Motor neuron (in vitro differentiated cells): ENCODE measurements at regions of chr3 and their contacts with region 1.

Region 1: GRCh38 chr3:134803051-134803505 is 8.0 kb downstream of the EPHB1 start:
- ATAC-seq: no peak
- H3K4me3 ChIP-seq: no peak overlapping the region
- H3K27ac ChIP-seq: no peak overlapping the region
- H3K4me1 ChIP-seq: peaks cover 21 to 24% of the 10 kb centered on the region in 2 donors

Region 2: GRCh38 chr3:134059671-134060560 is 743.2 kb before region 1 on chr3:
- in situ Hi-C with region 1: no loop called
- ATAC-seq: peak in 3 of 8 experiments; percentile 26 to 64 (median 60)
- H3K4me3 ChIP-seq: no peak overlapping the region
- H3K27ac ChIP-seq: no peak overlapping the region
- H3K4me1 ChIP-seq: peaks cover 0 to 12% of the 10 kb centered on the region in 2 donors

Region 3: GRCh38 chr3:134600685-134601463 is 202.2 kb before region 1 on chr3:
- in situ Hi-C with region 1: no loop called
- ATAC-seq: peak; percentile 38 to 95 (median 56)
- H3K4me3 ChIP-seq: peak overlapping the region in 3 of 5 donors; percentile 10 to 25 (median 12)
- H3K27ac ChIP-seq: peak overlapping the region in 1 of 2 donors; percentile 7
- H3K4me1 ChIP-seq: peaks cover 21 to 22% of the 10 kb centered on the region in 2 donors

Region 4: GRCh38 chr3:135125171-135125801 is 322.2 kb after region 1 on chr3:
- in situ Hi-C with region 1: no loop called
- ATAC-seq: peak in 3 of 8 experiments; percentile 24 to 36 (median 34)
- H3K4me3 ChIP-seq: no peak overlapping the region
- H3K27ac ChIP-seq: no peak overlapping the region
- H3K4me1 ChIP-seq: peaks cover 29 to 34% of the 10 kb centered on the region in 2 donors

Region 5: GRCh38 chr3:135503760-135504686 is 700.9 kb after region 1 on chr3:
- in situ Hi-C with region 1: loop called in 3 of 9 experiments (anchors 25 kb)
- ATAC-seq: peak; percentile 97 to 99 (median 98)
- H3K4me3 ChIP-seq: no peak overlapping the region
- H3K27ac ChIP-seq: peak overlapping the region in 1 of 2 donors; percentile 12
- H3K4me1 ChIP-seq: peaks cover 13 to 24% of the 10 kb centered on the region in 2 donors